Pancreas (tissue), 10 donors: ENCODE measurements at regions of chr9 and their contacts with region 1.

Region 1: DNA sequence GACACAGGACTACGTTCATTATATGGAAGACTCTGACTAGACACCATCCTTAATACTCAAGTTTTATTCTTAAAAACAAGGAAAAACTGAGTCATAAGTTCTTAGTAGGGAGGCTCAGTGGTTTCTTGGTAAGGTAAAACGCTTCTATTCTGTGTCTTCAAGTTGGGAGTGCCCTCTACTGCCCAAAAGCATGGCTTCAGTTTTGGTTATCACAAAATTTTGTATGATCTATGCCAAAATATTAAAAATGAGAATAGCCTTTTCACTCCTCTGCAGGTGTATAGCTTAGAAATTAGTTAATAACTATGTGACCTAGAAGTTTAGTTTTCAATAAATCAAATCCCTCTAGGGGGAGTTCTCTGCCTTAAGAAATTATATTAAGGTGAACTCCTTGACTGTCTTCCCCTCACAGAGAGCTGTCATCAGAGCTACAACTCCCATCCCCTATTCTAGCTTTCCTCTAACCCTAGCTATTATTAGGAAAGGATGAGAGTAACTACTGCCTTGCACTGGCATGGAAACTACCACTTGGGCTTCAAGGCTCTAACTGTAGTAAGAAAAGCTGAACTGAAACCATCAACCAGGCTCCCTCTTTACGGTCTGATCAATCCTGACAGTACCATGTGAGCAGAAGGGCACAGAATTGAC is 189.7 kb downstream of the GNAQ start:
- DNase-seq: no peak
- ATAC-seq: peak in 3 of 4 donors; percentile 29 to 53 (median 33)
- H3K4me3 ChIP-seq: no peak overlapping the region
- H3K27ac ChIP-seq: no peak overlapping the region
- H3K4me1 ChIP-seq: peaks cover 0 to 8% (median 4%) of the 10 kb centered on the region in 3 donors
- H3K27me3 ChIP-seq: no peaks in the 10 kb centered on the region
- CTCF ChIP-seq: peak in 1 of 4 donors; percentile 10

Region 2: DNA sequence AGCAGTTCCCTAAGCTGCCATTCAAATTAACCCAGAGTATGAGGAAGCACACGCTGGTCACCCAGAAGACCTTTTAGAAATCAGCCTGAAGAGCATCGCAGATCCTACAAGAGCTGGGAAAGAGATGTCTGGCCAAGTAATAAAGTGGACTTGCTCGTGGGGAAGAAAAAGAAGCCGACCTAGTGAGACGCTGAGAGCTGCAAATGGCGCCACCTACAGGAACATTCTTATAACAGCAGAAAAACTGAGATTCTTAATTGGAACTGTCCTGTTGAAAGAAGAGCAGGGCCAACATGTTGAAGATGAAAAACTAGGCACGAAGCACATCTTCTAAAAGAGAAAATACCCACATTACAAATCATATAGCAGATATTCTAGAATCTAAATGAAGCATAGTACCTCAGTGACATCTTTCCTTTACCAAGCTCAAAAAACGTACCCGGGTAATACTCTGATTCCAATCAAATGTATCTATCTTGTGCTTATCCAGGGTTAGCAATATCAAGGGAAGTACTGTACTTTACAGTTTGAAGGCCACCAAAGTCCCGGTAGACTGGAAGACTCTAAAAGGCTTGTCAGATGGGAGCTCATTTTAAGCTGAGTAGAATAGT is 193.6 kb after region 1 on chr9:
- intact Hi-C with region 1: loop called in 1 of 3 experiments (anchors 10 kb)
- DNase-seq: peak in 3 of 6 donors; percentile 44 to 65 (median 61)
- ATAC-seq: peak in 3 of 4 donors; percentile 17 to 48 (median 48)
- H3K4me3 ChIP-seq: no peak overlapping the region
- H3K27ac ChIP-seq: no peak overlapping the region
- H3K4me1 ChIP-seq: peaks cover 19 to 29% (median 25%) of the 10 kb centered on the region in 3 donors
- H3K27me3 ChIP-seq: no peaks in the 10 kb centered on the region
- CTCF ChIP-seq: peak; percentile 61 to 84 (median 76)

Region 3: DNA sequence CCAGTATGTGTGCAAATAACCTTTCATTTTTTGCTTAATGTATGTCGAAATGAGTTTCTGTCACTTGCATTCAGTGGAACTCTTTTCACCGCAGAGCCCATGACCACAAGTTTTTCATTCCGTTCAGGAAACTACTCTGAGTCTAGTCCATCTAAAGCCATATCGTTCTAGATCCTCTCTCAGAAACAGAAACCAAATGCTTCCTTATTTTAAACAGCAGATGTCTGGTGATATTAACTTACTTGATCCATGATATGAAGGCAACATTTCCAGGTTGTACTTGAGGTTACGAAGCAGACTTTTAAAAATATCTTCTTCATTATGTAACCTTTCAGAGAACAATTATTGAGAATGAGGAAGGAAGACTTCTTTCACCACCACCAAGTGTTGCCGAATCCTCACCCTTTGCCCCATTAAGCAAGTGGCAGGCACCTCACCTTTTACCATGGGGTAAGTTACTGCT is 262.1 kb after region 1 on chr9:
- intact Hi-C with region 1: no loop called
- DNase-seq: no peak
- ATAC-seq: peak in 2 of 4 donors; percentile 38 to 52
- H3K4me3 ChIP-seq: no peak overlapping the region
- H3K27ac ChIP-seq: no peak overlapping the region
- H3K4me1 ChIP-seq: no peaks in the 10 kb centered on the region
- H3K27me3 ChIP-seq: no peaks in the 10 kb centered on the region
- CTCF ChIP-seq: no peak